Caco-2 (cell line): ENCODE measurements at regions of chrX and their contacts with region 1.

Region 1: GRCh38 chrX:16123222-16123786 is at the start of gene GRPR:
- DNase-seq: peak; percentile 73 to 81
- H3K4me3 ChIP-seq: no peak within 1 kb of the TSS
- H3K4me3 Mint-ChIP-seq: no peak within 1 kb of the TSS
- H3K27ac Mint-ChIP-seq: no peak within 1 kb of the TSS
- H3K4me1 ChIP-seq: no peaks in the 10 kb centered on the region
- H3K4me1 Mint-ChIP-seq: no peaks in the 10 kb centered on the region
- H3K27me3 ChIP-seq: no peaks in the 10 kb centered on the region
- H3K27me3 Mint-ChIP-seq: peaks cover 5% of the 10 kb centered on the region
- CTCF ChIP-seq: peak; percentile 49 to 76
- total RNA-seq, gene GRPR: 0.21 TPM in 1 of 2 replicates, not detected in the other

Region 2: DNA sequence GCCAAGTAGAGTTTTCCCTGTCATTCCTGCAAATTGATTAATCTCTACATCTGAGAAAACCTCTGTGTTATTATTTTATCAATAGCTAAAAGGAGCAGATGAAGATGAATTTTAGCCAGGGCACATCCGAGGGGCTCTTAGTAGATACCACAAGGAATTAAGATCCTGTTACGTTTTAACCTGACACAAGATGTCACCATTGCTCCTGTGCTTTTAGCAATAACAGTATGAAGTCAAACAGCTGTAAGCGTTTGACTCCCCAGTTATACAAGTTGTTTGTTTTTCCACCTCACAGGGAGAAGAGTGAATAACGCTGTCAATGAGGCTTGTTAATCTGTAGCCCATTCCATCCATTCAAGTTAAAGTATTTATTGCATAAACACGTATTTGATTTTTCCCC is 192.7 kb before region 1 on chrX:
- CTCF ChIA-PET with region 1: interaction called, 4 read pairs
- POLR2A ChIA-PET with region 1: no interaction called
- intact Hi-C with region 1: loop called (anchors 5 kb)
- DNase-seq: peak in 1 of 2 experiments; percentile 19
- H3K4me3 ChIP-seq: no peak overlapping the region
- H3K4me3 Mint-ChIP-seq: no peak overlapping the region
- H3K27ac Mint-ChIP-seq: no peak overlapping the region
- H3K4me1 ChIP-seq: peaks cover 9% of the 10 kb centered on the region; the same call in 1 of the 2 replicates
- H3K4me1 Mint-ChIP-seq: peaks cover 12% of the 10 kb centered on the region
- H3K27me3 ChIP-seq: no peaks in the 10 kb centered on the region
- H3K27me3 Mint-ChIP-seq: no peaks in the 10 kb centered on the region
- CTCF ChIP-seq: no peak

Region 3: DNA sequence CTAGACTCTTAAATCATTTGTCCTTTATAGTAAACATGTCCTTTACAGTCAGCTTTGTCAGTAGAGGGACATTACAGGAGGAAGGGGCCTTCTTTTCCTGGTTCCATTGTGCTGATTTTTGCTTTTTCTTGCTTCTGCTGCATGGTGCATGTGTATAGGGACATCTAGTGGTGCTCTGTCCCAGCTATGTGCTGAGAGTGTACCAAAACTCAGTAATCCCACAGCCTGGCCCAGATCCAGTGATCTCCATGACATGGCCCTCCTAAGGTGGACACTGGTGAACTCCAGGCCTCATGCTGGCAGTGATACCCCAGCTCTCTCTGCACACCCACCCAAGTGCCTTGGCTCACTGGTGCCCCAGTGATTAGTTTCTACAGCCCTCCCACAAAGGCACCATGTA is 89.1 kb after region 1 on chrX:
- CTCF ChIA-PET with region 1: interaction called, 12 read pairs
- POLR2A ChIA-PET with region 1: no interaction called
- intact Hi-C with region 1: loop called (anchors 2 kb)
- DNase-seq: peak in 1 of 2 experiments; percentile 27
- H3K4me3 ChIP-seq: no peak overlapping the region
- H3K4me3 Mint-ChIP-seq: no peak overlapping the region
- H3K27ac Mint-ChIP-seq: no peak overlapping the region
- H3K4me1 ChIP-seq: 0 out of 2 replicates have a peak, but pooled peaks cover 5% of the 10 kb centered on the region
- H3K4me1 Mint-ChIP-seq: no peaks in the 10 kb centered on the region
- H3K27me3 ChIP-seq: no peaks in the 10 kb centered on the region
- H3K27me3 Mint-ChIP-seq: no peaks in the 10 kb centered on the region
- CTCF ChIP-seq: peak in 1 of 2 experiments; percentile 41

Region 4: GRCh38 chrX:16695079-16695676 is 571.9 kb after region 1 on chrX:
- CTCF ChIA-PET with region 1: no interaction called
- POLR2A ChIA-PET with region 1: no interaction called
- intact Hi-C with region 1: loop called (anchors 10 kb)
- DNase-seq: peak; percentile 45 to 57
- H3K4me3 ChIP-seq: no peak overlapping the region
- H3K4me3 Mint-ChIP-seq: no peak overlapping the region
- H3K27ac Mint-ChIP-seq: no peak overlapping the region
- H3K4me1 ChIP-seq: no peaks in the 10 kb centered on the region
- H3K4me1 Mint-ChIP-seq: no peaks in the 10 kb centered on the region
- H3K27me3 ChIP-seq: no peaks in the 10 kb centered on the region
- H3K27me3 Mint-ChIP-seq: no peaks in the 10 kb centered on the region
- CTCF ChIP-seq: peak; percentile 64 to 66